AG04449 (cell line): ENCODE measurements at regions of chr10 and their contacts with region 1.

Region 1: GRCh38 chr10:11270135-11270857 is 252.6 kb downstream of the CELF2 start:
- DNase-seq: no peak
- H3K4me3 ChIP-seq: no peak overlapping the region
- CTCF ChIP-seq: peak; percentile 98

Region 2: DNA sequence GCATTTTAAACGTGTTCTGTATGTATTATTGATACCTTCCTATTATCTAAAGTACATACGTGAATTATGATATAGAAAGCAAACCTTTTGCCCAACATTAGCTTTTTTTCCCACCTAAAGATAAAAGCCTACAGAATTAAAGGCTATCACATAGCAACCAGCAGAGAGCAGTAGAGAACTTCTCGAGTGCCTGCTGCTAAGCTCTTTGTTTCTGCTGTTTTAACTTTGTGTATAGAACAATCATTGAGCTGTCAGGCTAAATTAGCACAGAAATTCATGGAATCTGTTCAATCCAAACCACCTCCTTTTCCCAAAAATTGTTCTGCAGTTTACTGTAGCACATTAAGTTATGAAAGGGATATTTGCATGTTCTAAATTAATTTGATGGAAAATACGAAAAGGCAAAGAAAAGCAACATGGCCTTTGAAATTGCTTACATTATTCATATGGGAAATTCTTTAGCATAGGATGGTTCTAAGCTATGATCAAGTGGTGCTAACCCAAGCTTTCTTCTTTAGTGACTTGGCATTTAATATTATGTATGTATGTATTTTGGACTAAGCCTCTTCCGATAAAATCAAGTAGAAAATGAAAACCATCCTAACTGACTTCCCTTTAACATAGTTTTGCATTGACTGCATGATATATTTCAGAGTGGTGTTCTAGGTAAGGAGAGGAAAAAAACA is 1927.3 kb before region 1 on chr10:
- CTCF ChIA-PET with region 1: interaction called, 11 read pairs
- POLR2A ChIA-PET with region 1: no interaction called
- DNase-seq: no peak
- H3K4me3 ChIP-seq: no peak overlapping the region
- CTCF ChIP-seq: peak; percentile 48

Region 3: GRCh38 chr10:11113156-11113555 is 157.1 kb before region 1 on chr10:
- CTCF ChIA-PET with region 1: interaction called, 12 read pairs
- POLR2A ChIA-PET with region 1: no interaction called
- DNase-seq: no peak
- H3K4me3 ChIP-seq: no peak overlapping the region
- CTCF ChIP-seq: no peak

Region 4: GRCh38 chr10:11298116-11298515 is 27.8 kb after region 1 on chr10:
- CTCF ChIA-PET with region 1: no interaction called
- POLR2A ChIA-PET with region 1: no interaction called
- DNase-seq: no peak
- H3K4me3 ChIP-seq: no peak overlapping the region
- CTCF ChIP-seq: no peak